CD8-positive, alpha-beta T cell (primary cell): ENCODE measurements at regions of chr1 and their contacts with region 1.

Region 1: GRCh38 chr1:108691942-108692723 is at the start of gene PRPF38B:
- DNase-seq: peak; percentile 85 to 97 (median 94)
- ATAC-seq: peak; percentile 78
- H3K4me3 ChIP-seq: peak within 1 kb of the TSS; percentile 78 to 87
- H3K4me3 Mint-ChIP-seq: peak within 1 kb of the TSS; percentile 97
- H3K27ac ChIP-seq: peak within 1 kb of the TSS; percentile 92 to 97
- H3K27ac Mint-ChIP-seq: peak within 1 kb of the TSS; percentile 100
- H3K4me1 ChIP-seq: peaks cover 36% of the 10 kb centered on the region
- H3K4me1 Mint-ChIP-seq: peaks cover 47% of the 10 kb centered on the region
- H3K27me3 ChIP-seq: no peaks in the 10 kb centered on the region
- H3K27me3 Mint-ChIP-seq: no peaks in the 10 kb centered on the region
- CTCF ChIP-seq: no peak
- total RNA-seq, gene PRPF38B: 108 to 116 TPM

Region 2: GRCh38 chr1:108512239-108512981 is 179.7 kb before region 1 on chr1:
- CTCF ChIA-PET with region 1: interaction called, 5 read pairs
- POLR2A ChIA-PET with region 1: interaction called, 12 read pairs
- intact Hi-C with region 1: loop called in 1 of 2 experiments (anchors 1 kb)
- DNase-seq: peak in 2 of 9 experiments; percentile 65 to 75
- ATAC-seq: peak; percentile 69
- H3K4me3 ChIP-seq: no peak overlapping the region
- H3K4me3 Mint-ChIP-seq: no peak overlapping the region
- H3K27ac ChIP-seq: no peak overlapping the region
- H3K27ac Mint-ChIP-seq: no peak overlapping the region
- H3K4me1 ChIP-seq: no peaks in the 10 kb centered on the region
- H3K4me1 Mint-ChIP-seq: no peaks in the 10 kb centered on the region
- H3K27me3 ChIP-seq: no peaks in the 10 kb centered on the region
- H3K27me3 Mint-ChIP-seq: peaks cover 21% of the 10 kb centered on the region
- CTCF ChIP-seq: peak; percentile 99

Region 3: GRCh38 chr1:108661030-108661620 is 31.0 kb before region 1 on chr1 and contains the start of gene HENMT1:
- CTCF ChIA-PET with region 1: interaction called, 29 read pairs
- POLR2A ChIA-PET with region 1: interaction called, 142 read pairs
- intact Hi-C with region 1: loop called (anchors 1 kb)
- DNase-seq: peak; percentile 62 to 95 (median 82)
- ATAC-seq: peak; percentile 84
- H3K4me3 ChIP-seq: peak within 1 kb of the TSS; percentile 57 to 66
- H3K4me3 Mint-ChIP-seq: peak within 1 kb of the TSS; percentile 81
- H3K27ac ChIP-seq: peak within 1 kb of the TSS; percentile 90 to 98
- H3K27ac Mint-ChIP-seq: peak within 1 kb of the TSS; percentile 97
- H3K4me1 ChIP-seq: peaks cover 24% of the 10 kb centered on the region
- H3K4me1 Mint-ChIP-seq: peaks cover 50% of the 10 kb centered on the region
- H3K27me3 ChIP-seq: no peaks in the 10 kb centered on the region
- H3K27me3 Mint-ChIP-seq: no peaks in the 10 kb centered on the region
- CTCF ChIP-seq: no peak
- total RNA-seq, gene HENMT1: 7.5 to 8.3 TPM

Region 4: DNA sequence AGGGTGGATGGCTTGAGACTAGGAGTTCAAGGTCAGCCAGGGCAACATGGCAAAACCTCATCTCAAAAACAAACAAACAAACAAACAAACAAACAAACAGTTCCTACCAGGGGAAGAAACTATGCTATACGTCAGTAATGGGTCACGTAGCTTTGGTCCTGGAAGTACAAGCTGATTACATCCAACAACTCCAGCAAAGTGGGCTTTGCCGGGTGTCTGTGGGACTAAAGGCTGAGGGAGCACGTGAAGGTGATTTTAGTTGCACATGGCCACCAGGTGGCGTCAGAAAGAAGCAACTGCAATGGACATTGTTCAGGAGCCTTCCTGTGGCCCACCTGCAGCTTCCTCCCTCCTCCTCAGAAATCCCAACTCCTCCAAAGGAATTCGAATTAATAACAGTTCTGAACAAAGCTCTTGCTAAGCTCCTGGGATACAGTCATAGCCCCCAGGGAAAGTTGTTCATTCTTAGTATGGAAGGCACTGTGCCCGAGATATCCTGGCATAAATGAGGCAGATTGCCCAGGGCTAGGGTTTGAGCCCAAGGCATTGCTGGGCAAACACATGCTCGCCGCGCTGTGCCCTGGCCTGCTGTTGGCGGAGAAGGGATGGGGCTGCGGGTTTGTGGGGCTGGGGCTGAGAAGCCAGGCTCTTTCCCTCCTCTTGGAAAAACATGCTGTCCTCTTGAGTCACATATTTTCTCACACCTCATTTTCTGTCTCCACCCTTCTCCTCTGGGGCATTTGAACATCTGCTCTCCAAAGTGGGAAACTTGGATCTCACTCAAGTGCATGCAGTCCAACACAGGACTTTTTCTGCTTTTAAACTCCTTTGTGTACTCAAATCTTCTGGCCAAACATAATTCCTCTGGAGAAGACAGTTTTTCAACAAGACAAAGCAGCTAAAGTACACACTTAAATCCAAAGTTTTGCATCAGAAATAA is 136.2 kb after region 1 on chr1:
- CTCF ChIA-PET with region 1: interaction called, 8 read pairs
- POLR2A ChIA-PET with region 1: no interaction called
- intact Hi-C with region 1: loop called in 1 of 2 experiments (anchors 1 kb)
- DNase-seq: peak; percentile 35 to 79 (median 69)
- ATAC-seq: peak; percentile 77
- H3K4me3 ChIP-seq: no peak overlapping the region
- H3K4me3 Mint-ChIP-seq: no peak overlapping the region
- H3K27ac ChIP-seq: no peak overlapping the region
- H3K27ac Mint-ChIP-seq: no peak overlapping the region
- H3K4me1 ChIP-seq: no peaks in the 10 kb centered on the region
- H3K4me1 Mint-ChIP-seq: no peaks in the 10 kb centered on the region
- H3K27me3 ChIP-seq: no peaks in the 10 kb centered on the region
- H3K27me3 Mint-ChIP-seq: no peaks in the 10 kb centered on the region
- CTCF ChIP-seq: peak; percentile 72

Region 5: GRCh38 chr1:108963052-108963686 is 271.0 kb after region 1 on chr1 and contains the start of gene CLCC1:
- CTCF ChIA-PET with region 1: no interaction called
- POLR2A ChIA-PET with region 1: interaction called, 8 read pairs
- intact Hi-C with region 1: loop called (anchors 2 to 5 kb)
- DNase-seq: peak; percentile 83 to 96 (median 91)
- ATAC-seq: peak; percentile 87
- H3K4me3 ChIP-seq: peak within 1 kb of the TSS; percentile 57 to 86
- H3K4me3 Mint-ChIP-seq: peak within 1 kb of the TSS; percentile 87
- H3K27ac ChIP-seq: peak within 1 kb of the TSS; percentile 75 to 88
- H3K27ac Mint-ChIP-seq: peak within 1 kb of the TSS; percentile 92
- H3K4me1 ChIP-seq: peaks cover 24% of the 10 kb centered on the region
- H3K4me1 Mint-ChIP-seq: peaks cover 39% of the 10 kb centered on the region
- H3K27me3 ChIP-seq: no peaks in the 10 kb centered on the region
- H3K27me3 Mint-ChIP-seq: no peaks in the 10 kb centered on the region
- CTCF ChIP-seq: no peak
- total RNA-seq, gene CLCC1: 4.6 to 5.8 TPM

Region 6: GRCh38 chr1:109112652-109113285 is 420.6 kb after region 1 on chr1:
- CTCF ChIA-PET with region 1: no interaction called
- POLR2A ChIA-PET with region 1: interaction called, 3 read pairs
- intact Hi-C with region 1: loop called (anchors 1 to 5 kb)
- DNase-seq: peak; percentile 81 to 94 (median 89)
- ATAC-seq: peak; percentile 56
- H3K4me3 ChIP-seq: peak overlapping the region; percentile 46 to 66
- H3K4me3 Mint-ChIP-seq: peak overlapping the region; percentile 83
- H3K27ac ChIP-seq: peak overlapping the region; percentile 34 to 48
- H3K27ac Mint-ChIP-seq: peak overlapping the region; percentile 81
- H3K4me1 ChIP-seq: peaks cover 22% of the 10 kb centered on the region
- H3K4me1 Mint-ChIP-seq: peaks cover 29% of the 10 kb centered on the region
- H3K27me3 ChIP-seq: peaks cover 0 to 4% of the 10 kb centered on the region in 2 experiments
- H3K27me3 Mint-ChIP-seq: peaks cover 2% of the 10 kb centered on the region
- CTCF ChIP-seq: peak; percentile 90

Region 7: GRCh38 chr1:109483672-109484518 is 791.8 kb after region 1 on chr1 and contains the start of gene ATXN7L2:
- CTCF ChIA-PET with region 1: no interaction called
- POLR2A ChIA-PET with region 1: no interaction called
- intact Hi-C with region 1: loop called in 1 of 2 experiments (anchors 5 kb)
- DNase-seq: peak; percentile 87 to 97 (median 92)
- ATAC-seq: peak; percentile 81
- H3K4me3 ChIP-seq: peak within 1 kb of the TSS; percentile 78 to 90
- H3K4me3 Mint-ChIP-seq: peak within 1 kb of the TSS; percentile 94
- H3K27ac ChIP-seq: peak within 1 kb of the TSS; percentile 78 to 93
- H3K27ac Mint-ChIP-seq: peak within 1 kb of the TSS; percentile 91
- H3K4me1 ChIP-seq: peaks cover 22% of the 10 kb centered on the region
- H3K4me1 Mint-ChIP-seq: peaks cover 35% of the 10 kb centered on the region
- H3K27me3 ChIP-seq: no peaks in the 10 kb centered on the region
- H3K27me3 Mint-ChIP-seq: peaks cover 2% of the 10 kb centered on the region
- CTCF ChIP-seq: no peak
- total RNA-seq, gene ATXN7L2: 16.8 to 19.4 TPM